ENCODE measurements at regions of chr3 and their contacts with region 1.

Region 1: GRCh38 chr3:141465221-141465620 is 21.6 kb upstream of the RASA2 start:
- DNase-seq: no peak
- H3K4me3 ChIP-seq: no peak overlapping the region
- H3K27ac ChIP-seq: no peak overlapping the region
- H3K4me1 ChIP-seq: no peaks in the 10 kb centered on the region
- H3K27me3 ChIP-seq: no peaks in the 10 kb centered on the region
- CTCF ChIP-seq: no peak
- POLR2A ChIP-seq: no peak

Region 2: DNA sequence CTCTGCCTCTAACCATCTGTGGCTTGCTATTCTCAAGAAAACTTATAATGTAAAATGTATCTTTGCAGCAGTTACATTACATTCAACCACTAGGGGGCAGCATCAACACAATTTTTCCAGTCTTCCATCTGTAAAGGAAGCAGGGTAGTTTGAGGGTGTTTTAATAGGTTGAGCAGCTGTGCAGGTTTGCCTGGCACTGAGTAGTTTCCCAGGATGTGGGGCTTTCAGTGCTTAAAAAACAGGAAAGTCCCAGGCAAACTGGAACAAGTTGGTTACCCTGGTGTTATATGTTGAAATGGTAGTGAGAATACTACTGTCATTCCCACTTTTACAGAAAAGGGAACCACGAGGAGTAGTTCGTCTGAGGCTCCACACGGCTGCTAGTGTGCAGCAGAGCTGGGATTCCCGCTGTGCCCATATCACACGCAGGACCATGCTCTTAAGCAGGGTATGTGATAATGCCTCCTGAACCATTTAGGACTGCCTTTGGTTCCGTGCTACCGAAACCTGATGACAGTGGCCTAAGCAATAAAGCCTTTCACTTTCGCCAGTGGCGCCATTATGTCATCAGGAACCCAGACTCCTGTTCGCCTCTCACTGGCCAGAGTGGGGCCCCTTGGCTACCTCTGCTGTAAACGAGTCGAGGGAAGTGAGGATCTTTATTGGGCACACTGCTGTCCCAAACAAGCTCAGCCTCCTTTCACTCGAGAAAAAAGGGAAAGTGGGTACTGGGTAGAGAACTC is 161.6 kb before region 1 on chr3:
- CTCF ChIA-PET with region 1: interaction called, 351 read pairs
- POLR2A ChIA-PET with region 1: no interaction called
- dilution Hi-C with region 1: no loop called
- intact Hi-C with region 1: no loop called
- DNase-seq: peak; percentile 86
- H3K4me3 ChIP-seq: no peak overlapping the region
- H3K27ac ChIP-seq: no peak overlapping the region
- H3K4me1 ChIP-seq: no peaks in the 10 kb centered on the region
- H3K27me3 ChIP-seq: peaks cover 0 to 6% of the 10 kb centered on the region in 2 experiments
- CTCF ChIP-seq: peak; percentile 53 to 68
- POLR2A ChIP-seq: no peak

Region 3: GRCh38 chr3:141379250-141379966 is 85.8 kb before region 1 on chr3:
- CTCF ChIA-PET with region 1: no interaction called
- POLR2A ChIA-PET with region 1: no interaction called
- dilution Hi-C with region 1: no loop called
- intact Hi-C with region 1: no loop called
- DNase-seq: no peak
- H3K4me3 ChIP-seq: no peak overlapping the region
- H3K27ac ChIP-seq: no peak overlapping the region
- H3K4me1 ChIP-seq: no peaks in the 10 kb centered on the region
- H3K27me3 ChIP-seq: no peaks in the 10 kb centered on the region
- CTCF ChIP-seq: no peak
- POLR2A ChIP-seq: no peak

Region 4: DNA sequence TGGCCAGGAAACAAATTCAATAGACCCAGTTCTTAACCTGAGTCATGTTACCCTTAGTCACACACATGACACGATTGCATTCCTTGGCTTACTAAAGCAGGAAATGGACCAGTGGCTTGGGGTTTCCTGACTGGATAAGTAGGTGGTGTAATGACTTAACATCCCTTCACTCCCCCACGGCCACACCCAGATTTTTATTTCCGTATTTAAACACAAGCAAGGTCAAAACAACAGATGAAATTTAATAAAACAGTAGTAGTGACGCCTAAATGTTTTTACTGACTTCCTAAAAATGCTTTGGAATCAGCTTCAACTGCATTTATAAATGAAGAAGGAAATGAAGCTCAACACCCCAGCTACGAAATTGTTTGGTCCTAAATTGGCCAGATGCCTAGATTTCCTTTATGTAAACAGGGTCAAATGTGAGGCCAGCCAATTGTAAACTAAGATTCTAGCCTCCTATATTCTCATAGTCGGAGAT is 1978.7 kb after region 1 on chr3:
- CTCF ChIA-PET with region 1: no interaction called
- POLR2A ChIA-PET with region 1: no interaction called
- dilution Hi-C with region 1: no loop called
- intact Hi-C with region 1: no loop called
- DNase-seq: peak; percentile 98
- H3K4me3 ChIP-seq: no peak overlapping the region
- H3K27ac ChIP-seq: peak overlapping the region; percentile 98
- H3K4me1 ChIP-seq: peaks cover 25% of the 10 kb centered on the region
- H3K27me3 ChIP-seq: no peaks in the 10 kb centered on the region
- CTCF ChIP-seq: no peak
- POLR2A ChIP-seq: peak; percentile 62